AG04450 (cell line): ENCODE measurements at regions of chr10 and their contacts with region 1.

Region 1: GRCh38 chr10:73529089-73529832 is 33.4 kb upstream of the PPP3CB start:
- DNase-seq: peak; percentile 45
- H3K4me3 ChIP-seq: no peak overlapping the region
- H3K27ac ChIP-seq: no peak overlapping the region
- H3K27me3 ChIP-seq: no peaks in the 10 kb centered on the region
- CTCF ChIP-seq: peak; percentile 83

Region 2: GRCh38 chr10:73517271-73517877 is 11.9 kb before region 1 on chr10:
- CTCF ChIA-PET with region 1: interaction called, 42 read pairs
- POLR2A ChIA-PET with region 1: no interaction called
- DNase-seq: no peak
- H3K4me3 ChIP-seq: no peak overlapping the region
- H3K27ac ChIP-seq: no peak overlapping the region
- H3K27me3 ChIP-seq: no peaks in the 10 kb centered on the region
- CTCF ChIP-seq: no peak

Region 3: GRCh38 chr10:73625884-73626752 is 96.9 kb after region 1 on chr10:
- CTCF ChIA-PET with region 1: interaction called, 17 read pairs
- POLR2A ChIA-PET with region 1: no interaction called
- DNase-seq: peak; percentile 94
- H3K4me3 ChIP-seq: peak overlapping the region; percentile 95
- H3K27ac ChIP-seq: peak overlapping the region; percentile 85
- H3K27me3 ChIP-seq: no peaks in the 10 kb centered on the region
- CTCF ChIP-seq: no peak

Region 4: GRCh38 chr10:73650537-73651331 is 121.5 kb after region 1 on chr10:
- CTCF ChIA-PET with region 1: interaction called, 284 read pairs
- POLR2A ChIA-PET with region 1: interaction called, 3 read pairs
- DNase-seq: peak; percentile 65
- H3K4me3 ChIP-seq: no peak overlapping the region
- H3K27ac ChIP-seq: peak overlapping the region; percentile 91
- H3K27me3 ChIP-seq: no peaks in the 10 kb centered on the region
- CTCF ChIP-seq: no peak